Activated CD4-positive, alpha-beta T cell treated with anti-CD3 and anti-CD28 coated beads for 36 hours (primary cell): ENCODE measurements at regions of chr16 and their contacts with region 1.

Region 1: DNA sequence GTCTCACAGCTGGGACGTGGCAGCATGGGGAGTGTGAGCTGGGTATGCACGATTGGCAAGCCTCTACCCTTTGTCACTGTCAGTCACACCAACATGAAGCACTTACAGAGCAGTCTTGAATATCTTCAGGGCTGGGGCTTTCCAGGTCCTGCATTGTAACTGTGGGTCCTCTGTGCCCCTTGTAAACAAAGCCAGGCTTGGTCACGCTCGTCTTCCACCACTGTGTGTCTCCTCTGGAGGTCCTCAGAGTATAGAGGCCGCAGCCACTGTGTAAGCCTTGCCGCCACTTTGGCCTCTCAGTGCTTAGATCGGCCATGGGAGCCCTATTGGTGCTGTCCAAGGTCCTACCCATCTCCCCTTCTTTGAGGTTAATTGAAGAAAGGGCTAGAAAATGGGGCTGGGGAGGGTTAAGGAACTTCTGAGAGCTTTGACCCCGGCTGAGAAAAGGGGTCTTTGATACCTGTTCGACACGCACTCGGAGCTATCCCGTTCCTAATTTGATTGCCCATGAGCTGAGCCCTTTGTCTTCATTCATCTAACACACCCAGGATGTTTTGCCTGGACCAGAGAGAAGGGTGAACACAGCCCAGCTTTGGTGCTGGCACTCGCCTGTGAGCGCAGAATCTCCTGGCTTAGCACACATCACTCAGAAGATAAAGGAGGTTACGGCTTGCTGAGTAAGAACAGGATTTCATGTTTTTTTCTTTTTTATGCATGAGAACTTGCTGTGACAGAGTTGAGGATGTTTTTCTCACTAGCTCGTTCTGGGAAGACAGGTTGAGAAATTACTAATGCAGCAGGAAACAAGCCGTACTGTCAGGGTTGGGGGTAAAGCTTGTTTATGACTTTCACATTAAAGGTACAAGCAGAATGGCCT is 267.9 kb downstream of the CPPED1 start:
- DNase-seq: peak; percentile 79
- ATAC-seq: peak; percentile 72
- H3K4me3 Mint-ChIP-seq: peak overlapping the region; percentile 54
- H3K27ac Mint-ChIP-seq: peak overlapping the region; percentile 95
- H3K4me1 Mint-ChIP-seq: peaks cover 97% of the 10 kb centered on the region
- H3K27me3 Mint-ChIP-seq: no peaks in the 10 kb centered on the region

Region 2: GRCh38 chr16:11586856-11587642 is 948.7 kb before region 1 on chr16 and contains the start of gene LITAF:
- CTCF ChIA-PET with region 1: no interaction called
- POLR2A ChIA-PET with region 1: no interaction called
- intact Hi-C with region 1: loop called in 1 of 2 experiments (anchors 5 kb)
- DNase-seq: peak; percentile 74
- ATAC-seq: peak; percentile 53
- H3K4me3 Mint-ChIP-seq: peak within 1 kb of the TSS; percentile 89
- H3K27ac Mint-ChIP-seq: peak within 1 kb of the TSS; percentile 90
- H3K4me1 Mint-ChIP-seq: peaks cover 32% of the 10 kb centered on the region
- H3K27me3 Mint-ChIP-seq: no peaks in the 10 kb centered on the region
- total RNA-seq, gene LITAF: 99.0 to 116 TPM

Region 3: DNA sequence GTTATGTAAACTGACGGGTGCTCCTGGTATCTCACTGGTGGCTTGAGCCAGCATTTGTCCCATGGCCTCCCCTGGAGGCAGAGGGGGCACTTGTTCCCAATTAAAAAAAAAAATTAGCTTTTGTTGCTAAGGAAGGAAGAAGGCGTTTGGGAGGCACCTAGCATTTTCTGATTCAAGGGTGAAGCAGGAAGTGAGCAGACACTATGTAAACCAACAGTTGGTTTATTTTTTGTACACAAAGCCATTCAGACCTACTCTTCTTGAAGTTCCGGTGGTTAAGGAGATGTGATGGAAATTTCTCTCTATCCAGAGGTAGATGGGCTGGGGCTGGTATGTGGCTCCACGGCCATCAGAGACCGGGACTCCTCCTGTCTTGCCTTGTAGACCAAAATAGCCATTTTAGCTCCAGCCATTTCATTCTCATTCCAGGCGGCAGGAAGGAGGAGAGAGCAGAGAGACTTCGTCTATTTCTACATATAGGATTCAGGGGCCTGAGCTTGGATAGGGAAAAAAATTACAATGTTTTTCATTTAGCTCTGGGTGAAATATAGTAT is 456.3 kb before region 1 on chr16:
- CTCF ChIA-PET with region 1: no interaction called
- POLR2A ChIA-PET with region 1: interaction called, 4 read pairs
- intact Hi-C with region 1: loop called (anchors 2 to 10 kb)
- DNase-seq: peak; percentile 13
- ATAC-seq: no peak
- H3K4me3 Mint-ChIP-seq: peak overlapping the region; percentile 53
- H3K27ac Mint-ChIP-seq: peak overlapping the region; percentile 97
- H3K4me1 Mint-ChIP-seq: peaks cover 76% of the 10 kb centered on the region
- H3K27me3 Mint-ChIP-seq: no peaks in the 10 kb centered on the region

Region 4: GRCh38 chr16:12455287-12455798 is 80.4 kb before region 1 on chr16:
- CTCF ChIA-PET with region 1: interaction called, 5 read pairs
- POLR2A ChIA-PET with region 1: no interaction called
- intact Hi-C with region 1: loop called in 1 of 2 experiments (anchors 2 kb)
- DNase-seq: peak; percentile 74
- ATAC-seq: peak; percentile 71
- H3K4me3 Mint-ChIP-seq: no peak overlapping the region
- H3K27ac Mint-ChIP-seq: no peak overlapping the region
- H3K4me1 Mint-ChIP-seq: peaks cover 29% of the 10 kb centered on the region
- H3K27me3 Mint-ChIP-seq: no peaks in the 10 kb centered on the region

Region 5: DNA sequence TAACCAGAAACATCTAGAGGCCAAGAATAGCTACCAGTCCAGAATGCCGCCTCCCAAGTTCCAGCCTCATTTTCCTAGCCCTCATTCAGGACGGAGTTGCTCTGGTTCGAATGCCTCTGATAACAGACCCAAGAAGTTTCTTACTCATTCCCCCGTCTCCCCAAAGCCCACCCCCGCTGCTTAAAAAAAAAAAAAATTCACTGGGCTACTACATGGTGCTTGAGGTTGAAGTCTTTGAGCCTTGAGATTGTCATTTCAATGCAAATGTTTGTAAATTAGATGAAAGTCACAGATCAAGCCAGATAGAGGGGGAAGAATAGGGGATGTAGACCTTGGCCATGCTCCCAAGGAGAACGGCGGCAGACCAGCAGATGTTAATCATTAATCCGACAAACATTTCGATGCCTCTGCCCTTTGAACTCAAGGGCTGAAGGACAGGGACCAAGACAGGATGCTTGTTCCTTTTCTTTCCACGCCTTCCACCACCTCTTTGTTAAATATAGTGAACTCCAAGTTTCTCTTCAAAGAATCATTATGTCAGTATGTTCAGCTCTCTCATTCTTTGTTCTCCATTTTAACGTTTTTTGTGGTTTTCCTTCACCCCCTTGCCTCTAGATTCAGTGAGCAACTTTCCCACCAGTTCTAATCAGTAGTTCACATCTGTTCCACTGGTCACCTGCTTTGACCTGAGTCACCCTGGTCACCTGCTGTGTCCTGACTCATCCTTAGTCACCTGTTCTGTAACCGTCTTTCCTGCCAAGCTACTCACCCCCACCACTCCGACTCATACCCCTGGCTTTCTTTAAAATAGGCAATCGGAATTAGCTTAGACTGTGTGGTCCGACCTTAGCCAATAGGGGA is 77.6 kb after region 1 on chr16:
- CTCF ChIA-PET with region 1: interaction called, 6 read pairs
- POLR2A ChIA-PET with region 1: interaction called, 13 read pairs
- intact Hi-C with region 1: loop called (anchors 1 kb)
- DNase-seq: peak; percentile 83
- ATAC-seq: peak; percentile 86
- H3K4me3 Mint-ChIP-seq: peak overlapping the region; percentile 49
- H3K27ac Mint-ChIP-seq: peak overlapping the region; percentile 89
- H3K4me1 Mint-ChIP-seq: peaks cover 50% of the 10 kb centered on the region
- H3K27me3 Mint-ChIP-seq: no peaks in the 10 kb centered on the region

Region 6: GRCh38 chr16:12803203-12804097 is 267.7 kb after region 1 on chr16 and contains the start of gene CPPED1:
- CTCF ChIA-PET with region 1: interaction called, 3 read pairs
- POLR2A ChIA-PET with region 1: no interaction called
- intact Hi-C with region 1: loop called (anchors 1 kb)
- DNase-seq: peak; percentile 95
- ATAC-seq: peak; percentile 93
- H3K4me3 Mint-ChIP-seq: peak within 1 kb of the TSS; percentile 97
- H3K27ac Mint-ChIP-seq: peak within 1 kb of the TSS; percentile 92
- H3K4me1 Mint-ChIP-seq: peaks cover 28% of the 10 kb centered on the region
- H3K27me3 Mint-ChIP-seq: no peaks in the 10 kb centered on the region
- total RNA-seq, gene CPPED1: 8.0 to 9.8 TPM